ENCODE measurements at regions of chr7 and their contacts with region 1.

Region 1: DNA sequence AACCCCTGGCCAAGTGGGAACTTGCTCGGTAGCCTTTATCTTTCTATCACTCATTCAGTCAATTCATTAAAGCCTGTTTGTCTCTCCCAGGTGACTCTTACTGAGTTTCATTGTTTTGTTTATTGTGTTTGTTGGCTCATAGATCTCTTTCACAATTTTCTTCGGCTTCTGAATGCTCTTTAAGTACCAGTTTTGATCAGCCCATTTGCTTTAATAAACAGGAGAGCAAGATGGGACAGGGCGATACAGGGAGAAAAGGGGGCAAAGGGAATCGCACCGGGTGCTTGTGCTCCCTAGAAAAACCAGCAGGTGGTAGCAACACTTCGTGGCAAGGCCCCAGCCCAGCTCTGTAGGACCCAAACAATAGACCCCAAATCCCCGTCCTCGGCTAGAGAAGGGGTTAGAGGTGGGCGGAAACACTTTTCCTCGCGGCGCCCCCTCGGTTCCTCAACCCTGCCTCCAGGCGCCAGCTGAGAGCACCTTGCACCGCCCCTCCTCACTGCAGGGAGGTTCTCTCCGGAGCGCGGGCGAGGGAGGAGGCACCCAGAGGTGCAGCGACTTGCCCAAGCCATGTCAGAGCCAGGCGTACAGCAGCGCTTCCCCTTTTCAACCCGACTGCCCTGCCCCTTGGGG is 1.0 kb upstream of the EPHB6 start:
- DNase-seq: peak; percentile 52 to 69
- ATAC-seq: peak; percentile 77

Region 2: DNA sequence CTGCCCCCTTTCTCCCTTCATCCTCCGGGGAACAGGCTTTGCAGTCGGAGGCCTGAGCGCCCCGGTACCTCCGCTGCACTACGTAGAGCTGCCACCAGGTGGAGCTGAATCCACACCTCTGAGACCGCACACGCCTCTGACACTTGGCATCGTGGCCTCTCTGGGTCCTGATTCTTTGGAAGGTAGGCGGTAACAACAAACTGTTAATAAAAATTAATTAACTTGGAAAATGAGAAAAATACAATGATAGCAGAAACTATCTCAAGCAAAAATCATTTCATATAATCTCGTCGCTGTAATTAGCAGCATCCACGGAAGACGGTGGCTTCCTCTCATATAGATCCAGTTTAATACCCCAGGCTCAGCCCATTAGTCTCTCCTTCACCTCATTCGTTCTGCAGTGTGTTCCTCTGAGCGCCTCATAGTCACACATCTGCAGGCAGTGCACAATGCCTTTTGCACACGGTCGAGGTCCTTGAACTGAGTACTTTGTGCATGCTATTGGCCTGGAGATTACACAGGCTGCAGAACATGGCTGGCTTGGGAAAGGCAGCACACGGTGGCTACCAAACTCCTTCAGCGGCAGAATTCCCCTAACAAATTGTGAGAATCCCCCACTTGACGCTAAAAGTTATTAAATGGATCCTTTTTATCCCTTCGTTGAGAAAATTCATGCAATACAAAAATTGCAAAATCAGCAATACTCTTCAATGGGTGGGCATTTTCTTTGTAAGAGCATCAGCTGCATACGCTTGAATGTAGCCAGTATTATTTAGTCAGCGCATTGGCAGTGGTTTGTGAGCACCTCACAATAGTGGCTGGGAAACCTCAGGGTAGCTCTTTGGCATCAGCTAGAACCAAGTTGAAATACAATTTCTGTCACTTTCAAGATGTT is 154.4 kb after region 1 on chr7:
- intact Hi-C with region 1: loop called in 1 of 2 experiments (anchors 10 kb)
- DNase-seq: peak; percentile 42 to 84
- ATAC-seq: peak; percentile 89

Region 3: GRCh38 chr7:143214789-143215679 is 361.2 kb after region 1 on chr7:
- intact Hi-C with region 1: loop called in 1 of 2 experiments (anchors 10 kb)
- DNase-seq: peak; percentile 35 to 42
- ATAC-seq: peak; percentile 74